ENCODE measurements at regions of chr3 and their contacts with region 1.

Region 1: GRCh38 chr3:19866751-19867347 is 67.2 kb downstream of the EFHB start:
- DNase-seq: peak; percentile 58
- ATAC-seq: peak; percentile 61
- H3K4me3 Mint-ChIP-seq: no peak overlapping the region
- H3K27ac Mint-ChIP-seq: no peak overlapping the region
- H3K4me1 Mint-ChIP-seq: no peaks in the 10 kb centered on the region
- H3K27me3 Mint-ChIP-seq: peaks cover 4% of the 10 kb centered on the region
- CTCF ChIP-seq: peak; percentile 79

Region 2: DNA sequence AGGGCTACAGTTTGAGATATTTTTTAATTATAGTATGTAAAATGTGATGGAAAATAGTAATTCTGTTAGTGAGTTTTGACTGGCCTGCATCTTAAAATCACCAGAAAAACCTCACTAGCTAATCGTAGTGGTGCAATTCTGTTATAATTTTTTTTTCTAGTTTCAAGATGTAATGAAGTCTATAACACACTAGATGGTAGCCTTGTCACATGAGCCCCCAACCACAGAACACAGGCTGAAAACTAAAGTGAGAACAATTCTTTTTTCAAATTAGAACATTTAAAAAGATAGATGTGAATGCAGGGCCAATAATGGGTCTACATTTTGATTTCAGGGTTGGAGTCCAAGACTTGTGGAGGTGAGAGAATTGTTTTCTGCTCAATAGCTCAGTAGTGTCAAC is 801.8 kb before region 1 on chr3:
- CTCF ChIA-PET with region 1: interaction called, 11 read pairs
- POLR2A ChIA-PET with region 1: no interaction called
- intact Hi-C with region 1: loop called (anchors 10 kb)
- DNase-seq: no peak
- ATAC-seq: no peak
- H3K4me3 Mint-ChIP-seq: no peak overlapping the region
- H3K27ac Mint-ChIP-seq: no peak overlapping the region
- H3K4me1 Mint-ChIP-seq: no peaks in the 10 kb centered on the region
- H3K27me3 Mint-ChIP-seq: no peaks in the 10 kb centered on the region
- CTCF ChIP-seq: no peak

Region 3: GRCh38 chr3:19668163-19668562 is 198.7 kb before region 1 on chr3:
- CTCF ChIA-PET with region 1: no interaction called
- POLR2A ChIA-PET with region 1: no interaction called
- intact Hi-C with region 1: no loop called
- DNase-seq: no peak
- ATAC-seq: no peak
- H3K4me3 Mint-ChIP-seq: no peak overlapping the region
- H3K27ac Mint-ChIP-seq: no peak overlapping the region
- H3K4me1 Mint-ChIP-seq: no peaks in the 10 kb centered on the region
- H3K27me3 Mint-ChIP-seq: no peaks in the 10 kb centered on the region
- CTCF ChIP-seq: no peak

Region 4: GRCh38 chr3:19711160-19711782 is 155.6 kb before region 1 on chr3:
- CTCF ChIA-PET with region 1: no interaction called
- POLR2A ChIA-PET with region 1: no interaction called
- intact Hi-C with region 1: no loop called
- DNase-seq: no peak
- ATAC-seq: no peak
- H3K4me3 Mint-ChIP-seq: no peak overlapping the region
- H3K27ac Mint-ChIP-seq: no peak overlapping the region
- H3K4me1 Mint-ChIP-seq: no peaks in the 10 kb centered on the region
- H3K27me3 Mint-ChIP-seq: no peaks in the 10 kb centered on the region
- CTCF ChIP-seq: no peak

Region 5: GRCh38 chr3:19877656-19878055 is 10.8 kb after region 1 on chr3:
- CTCF ChIA-PET with region 1: interaction called, 18 read pairs
- POLR2A ChIA-PET with region 1: no interaction called
- intact Hi-C with region 1: no loop called
- DNase-seq: no peak
- ATAC-seq: no peak
- H3K4me3 Mint-ChIP-seq: no peak overlapping the region
- H3K27ac Mint-ChIP-seq: no peak overlapping the region
- H3K4me1 Mint-ChIP-seq: no peaks in the 10 kb centered on the region
- H3K27me3 Mint-ChIP-seq: peaks cover 8% of the 10 kb centered on the region
- CTCF ChIP-seq: no peak

Region 6: DNA sequence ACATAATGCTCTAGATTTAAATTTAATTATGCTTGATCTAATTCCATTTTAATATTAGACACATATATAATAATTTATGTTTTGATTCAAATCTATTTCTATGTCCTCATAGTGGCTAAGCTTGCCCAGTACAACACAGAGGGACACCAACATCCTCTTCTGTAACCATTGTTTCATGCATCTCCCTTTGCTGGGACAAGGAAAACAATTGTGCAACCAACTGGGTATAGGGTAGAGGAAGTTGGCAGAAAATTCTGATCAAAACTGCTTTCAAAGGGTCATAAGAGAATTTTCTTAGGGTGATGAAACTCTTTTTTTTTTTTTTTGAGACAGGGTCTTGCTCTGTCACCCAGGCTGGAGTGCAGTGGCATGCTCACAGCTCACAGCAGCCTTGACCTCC is 440.5 kb after region 1 on chr3:
- CTCF ChIA-PET with region 1: no interaction called
- POLR2A ChIA-PET with region 1: no interaction called
- intact Hi-C with region 1: no loop called
- DNase-seq: no peak
- ATAC-seq: no peak
- H3K4me3 Mint-ChIP-seq: no peak overlapping the region
- H3K27ac Mint-ChIP-seq: no peak overlapping the region
- H3K4me1 Mint-ChIP-seq: no peaks in the 10 kb centered on the region
- H3K27me3 Mint-ChIP-seq: no peaks in the 10 kb centered on the region
- CTCF ChIP-seq: no peak